CD4-positive, alpha-beta memory T cell (primary cell): ENCODE measurements at regions of chr21 and their contacts with region 1.

Region 1: DNA sequence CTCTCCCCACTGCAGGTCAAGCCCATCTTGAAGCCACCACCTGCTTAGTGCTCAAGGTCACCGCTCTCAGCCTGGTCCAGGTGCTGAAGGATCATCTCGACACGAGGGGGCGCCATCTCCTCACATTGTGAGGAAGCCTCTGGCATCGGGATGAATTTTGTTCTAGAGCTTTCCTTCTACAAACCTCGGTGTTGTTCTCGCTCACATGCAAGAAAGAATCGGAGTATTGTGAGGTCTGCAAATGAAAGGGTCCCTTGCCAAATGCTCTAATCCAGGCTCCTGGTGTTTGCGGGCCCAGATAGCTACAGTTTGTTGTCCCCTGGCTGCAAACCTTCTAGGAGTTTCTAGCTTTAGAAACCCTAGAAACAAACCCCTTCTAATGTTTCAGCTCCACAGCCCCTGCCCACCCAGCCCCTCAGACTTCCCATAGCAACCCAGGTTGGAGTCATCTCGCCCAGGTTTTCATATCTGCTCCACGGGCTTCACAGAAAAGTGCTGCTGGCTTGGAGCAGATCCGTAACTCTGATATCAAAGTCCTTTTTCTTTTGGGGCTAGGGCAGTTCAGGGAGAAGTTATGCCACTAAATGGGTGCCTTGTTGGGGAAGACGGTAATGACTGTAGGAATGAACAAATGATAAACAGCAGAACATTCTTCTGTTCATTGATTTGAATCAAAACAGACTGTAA is 8.6 kb upstream of the ATP5PO start:
- DNase-seq: peak; percentile 80 to 86 (median 82)
- H3K4me3 ChIP-seq: no peak overlapping the region
- H3K4me3 Mint-ChIP-seq: peak overlapping the region in 3 of 8 donors; percentile 13 to 26 (median 23)
- H3K27ac ChIP-seq: no peak overlapping the region
- H3K27ac Mint-ChIP-seq: peak overlapping the region; percentile 12 to 91 (median 67)
- H3K4me1 ChIP-seq: peaks cover 8% of the 10 kb centered on the region
- H3K4me1 Mint-ChIP-seq: peaks cover 6 to 12% (median 9%) of the 10 kb centered on the region in 4 donors
- H3K27me3 ChIP-seq: no peaks in the 10 kb centered on the region
- H3K27me3 Mint-ChIP-seq: no peaks in the 10 kb centered on the region

Region 2: DNA sequence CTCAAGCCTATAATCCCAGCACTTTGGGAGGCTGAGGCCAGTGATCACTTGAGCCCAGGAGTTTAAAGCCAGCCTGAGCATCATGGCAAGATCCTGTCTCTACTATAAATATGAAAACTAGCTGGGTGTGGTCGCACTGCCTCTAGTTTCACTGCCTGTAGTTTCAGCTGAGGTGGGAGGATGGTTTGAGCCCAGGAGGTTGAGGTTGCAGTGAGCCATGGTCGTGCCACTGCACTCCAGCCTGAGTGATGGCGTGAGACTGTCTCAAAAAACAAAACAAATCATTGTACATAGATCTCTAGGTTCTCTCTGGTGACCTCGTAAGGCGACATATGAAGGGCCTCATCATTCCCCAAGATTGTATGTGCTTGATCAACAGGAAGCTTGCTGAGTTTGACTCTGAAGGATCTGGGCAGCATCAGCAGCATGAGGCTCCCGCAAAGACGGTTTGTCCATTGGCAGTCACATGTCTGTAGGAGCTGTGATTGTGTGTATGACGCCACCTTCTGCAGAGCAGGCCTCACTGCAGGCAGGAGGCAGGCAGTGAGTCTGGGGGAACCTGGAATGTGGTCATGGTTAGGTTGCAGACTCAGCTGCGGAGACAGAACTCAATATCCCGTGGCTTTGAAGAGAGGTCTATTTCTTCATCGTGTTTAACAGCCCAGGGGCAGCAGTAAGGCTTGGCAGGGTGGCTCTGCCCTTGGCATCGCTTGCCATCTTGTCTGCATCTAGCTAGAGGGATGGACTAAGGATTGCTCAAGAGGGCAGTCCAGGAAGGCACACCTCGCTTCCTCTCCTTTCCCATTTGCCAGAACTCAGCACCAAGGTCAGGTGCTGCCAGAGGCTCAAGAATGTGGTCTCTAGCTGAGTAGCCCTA is 22.6 kb before region 1 on chr21:
- CTCF ChIA-PET with region 1: interaction called, 15 read pairs
- POLR2A ChIA-PET with region 1: no interaction called
- intact Hi-C with region 1: no loop called
- DNase-seq: no peak
- H3K4me3 ChIP-seq: no peak overlapping the region
- H3K4me3 Mint-ChIP-seq: no peak overlapping the region
- H3K27ac ChIP-seq: no peak overlapping the region
- H3K27ac Mint-ChIP-seq: peak overlapping the region in 2 of 7 donors; percentile 2 to 17
- H3K4me1 ChIP-seq: no peaks in the 10 kb centered on the region
- H3K4me1 Mint-ChIP-seq: peaks cover 0 to 1% (median under 1%) of the 10 kb centered on the region in 4 donors
- H3K27me3 ChIP-seq: no peaks in the 10 kb centered on the region
- H3K27me3 Mint-ChIP-seq: peaks cover 0 to 1% of the 10 kb centered on the region in 2 donors

Region 3: DNA sequence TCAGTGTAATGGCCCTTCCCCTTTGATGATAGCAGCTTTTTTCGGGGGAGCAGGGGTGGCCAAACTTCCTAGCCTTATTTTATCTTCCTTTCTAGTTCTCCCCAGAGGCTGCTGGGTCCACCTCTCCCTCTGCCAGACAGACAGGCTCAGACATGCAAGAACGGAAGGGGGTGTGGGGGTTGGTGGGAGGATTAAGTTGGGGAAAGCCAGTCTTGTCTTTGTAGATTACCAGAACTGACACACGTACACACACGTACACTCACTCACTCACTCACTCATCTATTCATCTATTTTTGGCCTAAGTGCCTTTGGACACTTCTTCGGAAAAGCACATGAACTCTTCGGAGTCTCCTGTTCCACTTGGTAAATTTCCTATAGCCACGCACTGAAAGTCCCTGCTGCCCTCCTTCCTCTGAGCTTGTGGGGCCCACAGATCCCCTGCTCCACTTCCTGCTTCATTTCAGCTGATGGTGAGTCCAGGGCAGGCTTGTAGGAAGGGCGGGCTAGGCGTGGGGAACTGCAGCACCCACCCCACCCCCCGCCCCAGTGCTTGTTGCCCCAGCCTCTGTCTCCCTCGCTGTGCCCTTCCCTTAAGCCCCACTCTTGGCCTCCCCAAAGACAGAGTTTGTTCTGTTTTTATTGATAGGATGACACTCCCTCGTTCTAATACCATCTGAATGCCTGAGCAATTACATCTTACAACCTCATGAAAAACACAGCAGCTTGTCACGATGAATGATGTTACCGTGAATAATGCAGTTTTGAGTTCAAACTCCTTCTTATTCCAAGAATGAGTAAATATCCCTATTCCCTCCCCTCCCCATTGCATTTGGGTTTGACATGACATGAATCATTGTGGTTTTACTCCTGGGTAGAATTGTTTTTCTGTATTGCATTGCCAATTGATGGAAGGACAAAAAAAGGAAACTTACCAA is 52.1 kb after region 1 on chr21:
- CTCF ChIA-PET with region 1: interaction called, 13 read pairs
- POLR2A ChIA-PET with region 1: interaction called, 6 read pairs
- intact Hi-C with region 1: loop called (anchors 2 kb)
- DNase-seq: peak; percentile 21 to 80 (median 29)
- H3K4me3 ChIP-seq: peak overlapping the region; percentile 0 to 7
- H3K4me3 Mint-ChIP-seq: peak overlapping the region; percentile 41 to 83 (median 66)
- H3K27ac ChIP-seq: peak overlapping the region; percentile 58
- H3K27ac Mint-ChIP-seq: peak overlapping the region; percentile 67 to 98 (median 94)
- H3K4me1 ChIP-seq: peaks cover 33% of the 10 kb centered on the region
- H3K4me1 Mint-ChIP-seq: peaks cover 37 to 58% (median 48%) of the 10 kb centered on the region in 4 donors
- H3K27me3 ChIP-seq: no peaks in the 10 kb centered on the region
- H3K27me3 Mint-ChIP-seq: no peaks in the 10 kb centered on the region

Region 4: DNA sequence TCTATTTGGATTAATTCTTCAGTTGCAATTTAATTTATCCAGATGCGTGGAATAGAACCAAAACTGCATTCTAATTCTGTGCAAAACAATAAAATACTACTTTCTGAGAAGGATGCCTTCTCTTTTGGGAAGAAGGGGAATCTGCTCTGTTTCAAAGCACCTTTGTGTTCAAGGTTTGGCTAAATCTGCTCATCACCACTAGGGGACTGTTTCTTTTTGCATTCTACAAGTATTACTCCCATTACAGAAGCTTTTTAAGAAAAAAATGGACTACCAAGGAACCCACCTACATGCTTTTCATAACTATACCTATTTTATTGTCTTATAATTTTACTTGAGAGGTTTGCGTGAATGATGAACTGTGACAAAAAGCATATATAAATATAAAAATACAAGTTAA is 167.4 kb after region 1 on chr21:
- CTCF ChIA-PET with region 1: interaction called, 29 read pairs
- POLR2A ChIA-PET with region 1: interaction called, 6 read pairs
- intact Hi-C with region 1: no loop called
- DNase-seq: no peak
- H3K4me3 ChIP-seq: no peak overlapping the region
- H3K4me3 Mint-ChIP-seq: peak overlapping the region in 3 of 8 donors; percentile 7 to 62 (median 11)
- H3K27ac ChIP-seq: no peak overlapping the region
- H3K27ac Mint-ChIP-seq: peak overlapping the region in 2 of 7 donors; percentile 30 to 41
- H3K4me1 ChIP-seq: peaks cover 58% of the 10 kb centered on the region
- H3K4me1 Mint-ChIP-seq: peaks cover 39 to 57% (median 45%) of the 10 kb centered on the region in 4 donors
- H3K27me3 ChIP-seq: no peaks in the 10 kb centered on the region
- H3K27me3 Mint-ChIP-seq: no peaks in the 10 kb centered on the region

Region 5: DNA sequence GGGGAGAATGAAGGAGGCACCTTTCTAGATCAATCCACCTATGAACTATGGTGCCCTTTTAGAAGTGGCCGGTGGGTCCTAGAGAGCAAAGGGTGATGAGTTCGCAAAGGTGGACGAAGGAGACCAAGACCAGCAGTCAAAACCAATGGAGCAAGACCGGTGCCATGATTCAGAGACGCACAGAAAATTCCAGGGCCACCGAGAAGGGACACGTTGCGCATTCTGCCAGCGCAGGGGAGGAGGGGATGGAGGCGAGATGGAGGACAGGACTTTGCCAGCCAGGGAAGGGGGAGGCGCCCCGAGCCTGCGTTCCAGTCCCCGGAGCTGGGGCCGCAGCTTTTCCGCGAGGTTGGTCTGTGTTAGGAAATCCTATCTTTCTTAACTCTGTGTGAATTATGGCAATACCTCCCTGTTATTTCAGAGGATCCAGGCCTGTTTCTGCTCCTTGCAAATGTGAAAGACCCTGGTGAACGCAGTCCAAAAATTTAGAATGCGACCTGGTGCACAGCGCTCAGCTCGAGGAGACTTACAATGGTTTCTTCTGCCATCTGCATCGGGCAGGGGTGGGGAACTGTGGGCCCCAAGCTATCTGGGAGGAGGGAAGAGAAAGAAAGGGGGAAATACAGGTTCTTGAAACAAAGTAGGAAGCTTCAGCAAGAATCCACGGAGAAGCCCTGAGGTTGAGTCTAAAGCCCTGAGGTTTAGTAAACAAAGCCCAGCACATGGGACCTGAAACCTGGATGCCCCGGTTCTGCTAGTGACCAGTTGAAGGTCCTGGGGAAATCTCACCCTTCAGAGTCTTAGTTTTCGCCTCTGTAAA is 278.5 kb after region 1 on chr21:
- CTCF ChIA-PET with region 1: interaction called, 81 read pairs
- POLR2A ChIA-PET with region 1: interaction called, 13 read pairs
- intact Hi-C with region 1: loop called (anchors 2 kb)
- DNase-seq: no peak
- H3K4me3 ChIP-seq: no peak overlapping the region
- H3K4me3 Mint-ChIP-seq: peak overlapping the region; percentile 46 to 87 (median 80)
- H3K27ac ChIP-seq: no peak overlapping the region
- H3K27ac Mint-ChIP-seq: peak overlapping the region in 2 of 7 donors; percentile 31 to 52
- H3K4me1 ChIP-seq: peaks cover 32% of the 10 kb centered on the region
- H3K4me1 Mint-ChIP-seq: peaks cover 32 to 50% (median 36%) of the 10 kb centered on the region in 4 donors
- H3K27me3 ChIP-seq: no peaks in the 10 kb centered on the region
- H3K27me3 Mint-ChIP-seq: no peaks in the 10 kb centered on the region

Region 6: GRCh38 chr21:34261841-34262468 is 337.7 kb after region 1 on chr21:
- CTCF ChIA-PET with region 1: no interaction called
- POLR2A ChIA-PET with region 1: no interaction called
- intact Hi-C with region 1: no loop called
- DNase-seq: no peak
- H3K4me3 ChIP-seq: no peak overlapping the region
- H3K4me3 Mint-ChIP-seq: no peak overlapping the region
- H3K27ac ChIP-seq: no peak overlapping the region
- H3K27ac Mint-ChIP-seq: no peak overlapping the region
- H3K4me1 ChIP-seq: no peaks in the 10 kb centered on the region
- H3K4me1 Mint-ChIP-seq: no peaks in the 10 kb centered on the region
- H3K27me3 ChIP-seq: no peaks in the 10 kb centered on the region
- H3K27me3 Mint-ChIP-seq: peaks cover 4 to 7% of the 10 kb centered on the region in 2 donors

Region 7: DNA sequence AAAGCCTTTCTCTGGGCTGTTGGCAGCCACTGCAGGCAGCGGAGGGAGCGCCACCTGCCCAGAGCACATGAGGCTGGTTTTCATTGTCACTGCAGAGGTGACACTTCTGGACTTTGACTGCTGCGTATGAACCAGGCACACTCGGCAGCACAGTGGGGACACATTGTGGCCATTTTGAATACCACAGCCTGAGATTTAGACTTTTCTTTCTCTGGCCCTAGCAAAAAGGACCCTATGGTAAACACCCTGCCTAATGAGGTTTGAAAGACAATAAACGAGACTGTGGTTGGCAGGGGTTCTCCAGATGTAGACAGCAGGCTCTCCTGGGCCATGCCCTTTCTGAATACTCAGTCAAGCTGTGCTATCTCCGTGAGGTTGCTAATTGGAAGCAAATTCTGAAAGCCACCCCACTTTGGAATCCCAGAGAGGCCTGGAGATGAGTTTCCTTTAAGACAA is 427.6 kb after region 1 on chr21:
- CTCF ChIA-PET with region 1: interaction called, 335 read pairs
- POLR2A ChIA-PET with region 1: interaction called, 57 read pairs
- intact Hi-C with region 1: no loop called
- DNase-seq: peak in 2 of 5 donors; percentile 2 to 15
- H3K4me3 ChIP-seq: no peak overlapping the region
- H3K4me3 Mint-ChIP-seq: no peak overlapping the region
- H3K27ac ChIP-seq: no peak overlapping the region
- H3K27ac Mint-ChIP-seq: no peak overlapping the region
- H3K4me1 ChIP-seq: no peaks in the 10 kb centered on the region
- H3K4me1 Mint-ChIP-seq: peaks cover 4 to 6% (median 5%) of the 10 kb centered on the region in 4 donors
- H3K27me3 ChIP-seq: no peaks in the 10 kb centered on the region
- H3K27me3 Mint-ChIP-seq: peaks cover 19 to 20% of the 10 kb centered on the region in 2 donors